ENCODE measurements at regions of chr3 and their contacts with region 1.

Region 1: DNA sequence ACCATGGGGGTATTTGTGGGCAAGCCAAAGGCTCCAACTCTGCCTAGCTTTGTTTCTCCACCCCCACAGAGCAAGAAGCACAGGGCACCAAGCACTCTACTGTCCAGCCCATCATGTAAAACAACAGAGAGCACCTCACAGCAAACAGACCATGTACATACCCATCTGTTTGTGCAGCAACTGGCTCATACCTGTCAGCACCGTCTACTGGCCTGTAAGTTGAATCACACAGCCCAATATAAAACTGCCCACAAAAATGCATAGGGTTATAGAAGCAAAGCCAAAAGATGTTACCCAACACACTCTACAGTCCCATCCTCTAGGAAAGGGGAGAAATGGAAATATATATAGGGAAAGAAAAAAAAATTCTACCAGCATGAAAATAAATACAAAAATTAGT is 139.7 kb upstream of the CPNE4 start:
- ATAC-seq: no peak
- H3K4me3 ChIP-seq: no peak overlapping the region
- H3K27ac ChIP-seq: no peak overlapping the region
- H3K4me1 ChIP-seq: no peaks in the 10 kb centered on the region

Region 2: GRCh38 chr3:132047209-132047608 is 127.3 kb before region 1 on chr3:
- in situ Hi-C with region 1: loop called in 2 of 9 experiments (anchors 10 to 25 kb)
- ATAC-seq: no peak
- H3K4me3 ChIP-seq: no peak overlapping the region
- H3K27ac ChIP-seq: no peak overlapping the region
- H3K4me1 ChIP-seq: no peaks in the 10 kb centered on the region

Region 3: DNA sequence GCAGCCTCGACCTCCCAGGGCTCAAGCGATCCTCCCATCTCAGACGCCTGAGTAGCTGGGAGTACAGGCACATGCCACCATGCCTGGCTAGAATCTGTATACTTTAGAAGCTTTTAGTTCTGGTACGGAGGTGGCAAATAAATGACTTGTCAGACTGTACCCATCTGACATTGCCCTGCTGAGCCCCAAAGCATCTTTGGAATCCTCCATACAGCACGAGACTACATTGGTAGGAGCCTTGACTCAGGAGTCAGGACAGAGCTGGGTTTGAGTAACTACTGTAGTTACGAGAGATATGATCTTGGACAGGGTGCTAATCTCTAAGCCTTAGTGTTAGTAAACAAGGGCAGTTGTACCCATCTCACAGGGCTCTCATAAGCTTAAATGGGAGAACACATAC is 615.5 kb after region 1 on chr3:
- in situ Hi-C with region 1: no loop called
- ATAC-seq: no peak
- H3K4me3 ChIP-seq: no peak overlapping the region
- H3K27ac ChIP-seq: no peak overlapping the region
- H3K4me1 ChIP-seq: peaks cover 3 to 4% of the 10 kb centered on the region in 2 donors

Measured in motor neuron (in vitro differentiated cells).